GM12878 (cell line): ENCODE measurements at regions of chr2 and their contacts with region 1.

Region 1: GRCh38 chr2:65056215-65057053 is at the start of gene CEP68:
- DNase-seq: peak; percentile 90
- ATAC-seq: peak; percentile 90
- H3K4me3 ChIP-seq: peak within 1 kb of the TSS; percentile 74
- H3K27ac ChIP-seq: peak within 1 kb of the TSS; percentile 63
- H3K4me1 ChIP-seq: peaks cover 46% of the 10 kb centered on the region
- H3K27me3 ChIP-seq: no peaks in the 10 kb centered on the region
- CTCF ChIP-seq: no peak
- EP300 ChIP-seq: no peak
- POLR2A ChIP-seq: peak; percentile 92
- RAD21 ChIP-seq: no peak
- polyA plus RNA-seq, gene CEP68: 1.1 to 2.2 TPM

Region 2: GRCh38 chr2:64937687-64938491 is 118.5 kb before region 1 on chr2:
- CTCF ChIA-PET with region 1: no interaction called
- POLR2A ChIA-PET with region 1: interaction called, 4 read pairs
- RAD21 ChIA-PET with region 1: interaction called, 11 read pairs
- SMC1A ChIA-PET with region 1: interaction called, 6 read pairs
- in situ Hi-C with region 1: no loop called
- intact Hi-C with region 1: no loop called
- DNase-seq: peak; percentile 77
- ATAC-seq: peak; percentile 70
- H3K4me3 ChIP-seq: peak overlapping the region; percentile 76
- H3K27ac ChIP-seq: peak overlapping the region; percentile 92
- H3K4me1 ChIP-seq: peaks cover 67% of the 10 kb centered on the region
- H3K27me3 ChIP-seq: no peaks in the 10 kb centered on the region
- CTCF ChIP-seq: no peak
- EP300 ChIP-seq: peak in 1 of 2 experiments; percentile 12; a peak in 1 of 4 replicates
- POLR2A ChIP-seq: peak; percentile 60
- RAD21 ChIP-seq: no peak

Region 3: GRCh38 chr2:65169760-65170136 is 113.3 kb after region 1 on chr2:
- CTCF ChIA-PET with region 1: interaction called, 97 read pairs
- POLR2A ChIA-PET with region 1: no interaction called
- RAD21 ChIA-PET with region 1: interaction called, 3 read pairs
- SMC1A ChIA-PET with region 1: interaction called, 4 read pairs
- in situ Hi-C with region 1: loop called (anchors 10 kb)
- intact Hi-C with region 1: no loop called
- DNase-seq: no peak
- ATAC-seq: no peak
- H3K4me3 ChIP-seq: no peak overlapping the region
- H3K27ac ChIP-seq: no peak overlapping the region
- H3K4me1 ChIP-seq: no peaks in the 10 kb centered on the region; the same call in 1 of the 2 replicates
- H3K27me3 ChIP-seq: no peaks in the 10 kb centered on the region
- CTCF ChIP-seq: no peak
- EP300 ChIP-seq: no peak
- POLR2A ChIP-seq: no peak
- RAD21 ChIP-seq: no peak

Region 4: DNA sequence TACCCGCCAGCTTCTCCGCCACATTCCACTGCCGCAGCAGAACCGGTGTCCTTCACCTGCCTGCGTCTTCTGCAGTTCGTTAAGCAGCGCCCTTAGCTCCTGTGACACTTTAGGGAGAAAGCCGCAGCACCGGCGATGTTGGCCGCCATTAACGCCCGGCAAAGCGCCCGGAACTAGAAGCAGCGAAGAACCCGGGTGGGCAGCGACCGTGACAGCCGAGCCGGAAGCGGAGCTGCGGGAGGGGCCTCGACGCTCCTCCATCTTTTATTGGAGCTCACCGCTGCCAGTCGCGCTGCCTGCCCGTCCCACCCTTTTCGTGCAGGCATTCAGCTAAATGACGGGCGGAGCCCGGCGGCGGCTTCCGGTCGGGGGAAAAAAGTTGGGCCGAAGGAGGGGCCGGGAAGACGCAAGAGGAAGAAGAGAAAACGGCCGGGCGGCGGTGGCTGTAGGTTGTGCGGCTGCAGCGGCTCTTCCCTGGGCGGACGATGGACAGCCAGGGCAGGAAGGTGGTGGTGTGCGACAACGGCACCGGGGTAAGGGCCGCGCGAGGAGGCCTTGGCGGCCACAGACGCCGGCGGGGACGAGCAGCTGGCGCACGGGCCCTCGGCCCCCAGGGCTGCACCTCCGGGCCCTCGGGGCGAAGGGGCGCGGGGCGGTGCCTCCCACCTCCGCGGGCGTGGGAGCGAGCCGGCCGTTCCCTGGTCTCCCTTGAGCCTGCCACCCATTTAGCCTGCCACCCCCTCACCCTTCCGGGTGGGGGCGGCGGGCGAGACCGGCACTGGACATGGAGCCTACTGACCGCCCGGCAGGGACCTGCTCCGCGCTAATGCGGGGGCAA is 171.2 kb after region 1 on chr2 and contains the start of gene ACTR2:
- CTCF ChIA-PET with region 1: interaction called, 3 read pairs
- POLR2A ChIA-PET with region 1: interaction called, 15 read pairs
- RAD21 ChIA-PET with region 1: interaction called, 12 read pairs
- SMC1A ChIA-PET with region 1: interaction called, 4 read pairs
- in situ Hi-C with region 1: no loop called
- intact Hi-C with region 1: loop called (anchors 2 kb)
- DNase-seq: peak; percentile 90
- ATAC-seq: peak; percentile 92
- H3K4me3 ChIP-seq: peak within 1 kb of the TSS; percentile 97
- H3K27ac ChIP-seq: peak within 1 kb of the TSS; percentile 98
- H3K4me1 ChIP-seq: peaks cover 12% of the 10 kb centered on the region
- H3K27me3 ChIP-seq: no peaks in the 10 kb centered on the region
- CTCF ChIP-seq: no peak
- EP300 ChIP-seq: 0 out of 4 replicates have a peak, but pooled peaks of 1 of the 2 experiments have one; percentile 22
- POLR2A ChIP-seq: peak; percentile 98
- RAD21 ChIP-seq: no peak
- polyA plus RNA-seq, gene ACTR2: 94.2 to 124 TPM

Region 5: DNA sequence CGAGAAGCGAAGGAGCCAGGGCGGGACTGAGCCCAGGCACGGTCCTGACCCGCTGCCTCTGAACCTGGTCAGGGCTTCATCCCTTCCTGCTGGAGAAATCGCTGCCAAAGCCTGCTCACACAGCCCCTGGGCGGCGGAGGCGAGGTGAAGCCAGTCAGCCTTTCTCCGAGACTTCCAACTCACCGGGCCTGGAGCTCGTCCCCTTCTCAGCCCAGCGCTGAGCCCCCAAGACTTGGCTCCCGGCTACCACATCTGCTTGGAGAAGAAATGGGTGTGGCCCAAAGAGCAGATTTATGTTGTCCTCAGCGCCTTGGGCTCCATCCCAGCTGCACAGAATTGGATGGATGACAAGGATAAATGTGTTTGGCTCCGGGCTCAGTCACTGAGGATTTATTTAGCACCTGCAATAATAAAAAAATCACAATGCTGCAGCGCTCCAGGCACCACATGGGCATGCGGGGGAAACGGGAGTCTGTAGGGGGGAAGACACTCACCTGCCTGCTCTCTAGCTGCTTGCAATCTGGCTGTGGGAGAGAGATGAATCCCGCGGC is 236.1 kb after region 1 on chr2:
- CTCF ChIA-PET with region 1: no interaction called
- POLR2A ChIA-PET with region 1: no interaction called
- RAD21 ChIA-PET with region 1: no interaction called
- SMC1A ChIA-PET with region 1: no interaction called
- in situ Hi-C with region 1: no loop called
- intact Hi-C with region 1: no loop called
- DNase-seq: no peak
- ATAC-seq: no peak
- H3K4me3 ChIP-seq: no peak overlapping the region
- H3K27ac ChIP-seq: no peak overlapping the region
- H3K4me1 ChIP-seq: peaks cover 8% of the 10 kb centered on the region
- H3K27me3 ChIP-seq: peaks cover 0 to 2% of the 10 kb centered on the region in 2 experiments; a peak in 1 of 4 replicates
- CTCF ChIP-seq: no peak
- EP300 ChIP-seq: no peak
- POLR2A ChIP-seq: no peak
- RAD21 ChIP-seq: no peak

Region 6: DNA sequence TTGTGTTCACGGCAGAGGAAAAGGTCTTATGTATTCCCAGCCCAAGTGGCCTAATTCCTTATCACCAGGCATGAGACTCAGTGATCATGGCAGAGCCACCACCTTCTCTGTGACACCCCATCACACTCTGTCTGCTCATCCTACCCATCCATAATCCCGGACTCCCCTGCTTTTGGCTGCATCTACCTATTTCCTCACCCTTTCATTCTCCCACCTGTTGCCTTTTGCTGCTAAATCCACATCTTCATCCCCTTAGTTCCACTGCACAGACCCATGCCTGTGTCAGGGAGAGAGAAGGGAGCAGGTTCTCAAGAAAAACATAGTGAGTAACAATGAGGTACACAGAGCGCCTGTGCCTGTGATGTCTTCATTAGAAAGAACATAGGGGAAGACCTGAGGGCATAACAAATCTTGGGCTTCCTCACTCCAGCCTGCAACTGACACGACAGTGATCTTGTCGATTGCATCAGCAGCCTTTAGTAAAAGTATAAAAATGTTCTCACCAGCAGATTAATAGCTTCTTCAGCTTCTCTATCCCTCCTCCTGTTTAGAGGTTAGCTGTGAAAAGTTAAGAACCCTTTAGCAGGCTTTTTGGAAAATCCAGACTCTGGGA is 622.5 kb after region 1 on chr2:
- CTCF ChIA-PET with region 1: no interaction called
- POLR2A ChIA-PET with region 1: no interaction called
- RAD21 ChIA-PET with region 1: no interaction called
- SMC1A ChIA-PET with region 1: no interaction called
- in situ Hi-C with region 1: no loop called
- intact Hi-C with region 1: no loop called
- DNase-seq: no peak
- ATAC-seq: no peak
- H3K4me3 ChIP-seq: no peak overlapping the region
- H3K27ac ChIP-seq: no peak overlapping the region
- H3K4me1 ChIP-seq: no peaks in the 10 kb centered on the region
- H3K27me3 ChIP-seq: no peaks in the 10 kb centered on the region
- CTCF ChIP-seq: no peak
- EP300 ChIP-seq: no peak
- POLR2A ChIP-seq: no peak
- RAD21 ChIP-seq: no peak